Naive thymus-derived CD4-positive, alpha-beta T cell (primary cell): ENCODE measurements at regions of chr5 and their contacts with region 1.

Region 1: GRCh38 chr5:133423618-133424282 is 188.6 kb downstream of the FSTL4 start:
- DNase-seq: peak; percentile 17 to 73 (median 52)
- ATAC-seq: peak; percentile 83
- H3K4me3 ChIP-seq: no peak overlapping the region
- H3K4me3 Mint-ChIP-seq: no peak overlapping the region
- H3K27ac ChIP-seq: no peak overlapping the region
- H3K27ac Mint-ChIP-seq: peak overlapping the region in 1 of 9 donors; percentile 77
- H3K4me1 ChIP-seq: no peaks in the 10 kb centered on the region
- H3K4me1 Mint-ChIP-seq: peaks cover 0 to 10% (median 5%) of the 10 kb centered on the region in 7 donors
- H3K27me3 ChIP-seq: no peaks in the 10 kb centered on the region
- H3K27me3 Mint-ChIP-seq: peaks cover 6 to 16% (median 14%) of the 10 kb centered on the region in 5 donors

Region 2: DNA sequence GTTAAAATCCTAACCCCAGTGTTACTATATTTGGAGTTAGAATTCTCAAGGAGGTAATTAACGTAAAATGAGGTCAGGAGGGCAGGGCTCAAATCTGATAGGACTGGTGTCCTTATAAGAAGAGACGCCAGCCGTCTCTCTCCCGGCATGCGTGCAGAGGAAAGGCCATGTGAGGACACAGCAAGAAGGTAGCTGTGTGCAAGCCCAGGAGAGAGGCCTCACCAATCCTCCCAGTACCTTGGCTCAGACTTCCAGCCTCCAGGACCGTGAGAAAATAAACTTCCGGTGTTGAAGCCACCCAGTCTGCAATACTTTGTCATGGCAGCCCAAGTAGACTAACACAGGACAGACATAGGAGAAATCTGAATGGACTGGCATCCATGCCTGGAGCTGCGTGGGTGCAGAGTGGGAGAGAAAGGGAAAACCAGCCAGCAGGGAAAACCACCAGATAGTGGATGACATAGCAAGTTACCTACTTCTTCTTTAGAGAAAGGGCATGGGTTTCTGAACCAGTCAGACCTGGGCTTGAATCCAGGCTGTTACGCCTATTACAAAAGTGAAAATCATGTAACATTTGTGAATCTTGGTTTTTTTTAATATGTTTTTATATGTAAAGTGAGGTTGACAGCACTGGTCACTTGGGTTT is 99.4 kb after region 1 on chr5:
- CTCF ChIA-PET with region 1: no interaction called
- POLR2A ChIA-PET with region 1: no interaction called
- intact Hi-C with region 1: no loop called
- DNase-seq: no peak
- ATAC-seq: no peak
- H3K4me3 ChIP-seq: no peak overlapping the region
- H3K4me3 Mint-ChIP-seq: no peak overlapping the region
- H3K27ac ChIP-seq: no peak overlapping the region
- H3K27ac Mint-ChIP-seq: no peak overlapping the region
- H3K4me1 ChIP-seq: no peaks in the 10 kb centered on the region
- H3K4me1 Mint-ChIP-seq: no peaks in the 10 kb centered on the region
- H3K27me3 ChIP-seq: no peaks in the 10 kb centered on the region
- H3K27me3 Mint-ChIP-seq: peaks cover 0 to 25% (median 13%) of the 10 kb centered on the region in 5 donors

Region 3: DNA sequence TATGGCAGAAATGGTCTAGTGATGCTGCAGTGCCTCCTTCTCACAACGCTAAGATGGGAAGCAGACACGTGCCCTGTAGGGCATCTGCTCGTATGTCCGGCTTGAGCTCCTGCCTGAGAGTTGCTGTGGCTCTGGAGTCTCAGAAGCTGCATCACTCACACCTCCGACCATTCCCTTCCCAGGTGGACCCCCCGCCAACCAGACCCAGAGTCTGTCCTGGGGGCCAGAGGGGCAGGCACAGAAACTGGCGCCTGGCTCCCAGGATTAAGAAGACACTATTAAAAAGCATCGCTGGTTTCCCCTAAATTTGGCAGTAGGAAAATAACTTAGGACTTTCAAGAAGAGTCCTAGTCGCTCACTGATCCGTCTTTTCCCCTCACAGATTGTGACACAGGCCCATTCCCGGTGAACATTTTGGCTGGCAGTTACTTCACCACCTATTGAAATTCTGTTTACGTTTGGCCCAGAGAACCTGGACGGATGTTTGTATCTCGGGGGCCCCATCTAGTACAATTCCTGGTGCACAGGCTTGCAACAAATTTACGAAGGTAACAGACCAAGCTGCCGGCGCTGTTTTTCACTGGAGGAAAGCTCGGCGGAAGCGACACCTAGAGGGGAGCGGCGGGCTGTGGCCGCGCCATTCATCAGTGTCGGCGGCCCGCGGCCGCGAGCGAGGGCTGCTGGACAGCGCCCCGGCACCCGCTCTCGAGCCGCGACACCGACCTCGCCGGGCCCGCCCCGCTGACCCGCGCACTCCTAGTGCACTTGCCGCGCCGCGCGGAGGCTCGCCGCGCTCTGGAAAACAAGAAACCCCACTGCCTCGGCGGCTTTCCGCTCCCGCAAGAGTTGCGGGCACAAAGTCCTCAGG is 187.0 kb after region 1 on chr5:
- CTCF ChIA-PET with region 1: no interaction called
- POLR2A ChIA-PET with region 1: no interaction called
- intact Hi-C with region 1: loop called in 1 of 2 experiments (anchors 5 kb)
- DNase-seq: peak in 5 of 9 donors; percentile 8 to 48 (median 16)
- ATAC-seq: peak; percentile 58
- H3K4me3 ChIP-seq: peak overlapping the region; percentile 50
- H3K4me3 Mint-ChIP-seq: peak overlapping the region; percentile 49 to 87 (median 72)
- H3K27ac ChIP-seq: no peak overlapping the region
- H3K27ac Mint-ChIP-seq: no peak overlapping the region
- H3K4me1 ChIP-seq: no peaks in the 10 kb centered on the region
- H3K4me1 Mint-ChIP-seq: peaks cover 0 to 21% (median 6%) of the 10 kb centered on the region in 7 donors
- H3K27me3 ChIP-seq: peaks cover 7 to 13% of the 10 kb centered on the region in 2 donors
- H3K27me3 Mint-ChIP-seq: peaks cover 58 to 75% (median 63%) of the 10 kb centered on the region in 5 donors

Region 4: DNA sequence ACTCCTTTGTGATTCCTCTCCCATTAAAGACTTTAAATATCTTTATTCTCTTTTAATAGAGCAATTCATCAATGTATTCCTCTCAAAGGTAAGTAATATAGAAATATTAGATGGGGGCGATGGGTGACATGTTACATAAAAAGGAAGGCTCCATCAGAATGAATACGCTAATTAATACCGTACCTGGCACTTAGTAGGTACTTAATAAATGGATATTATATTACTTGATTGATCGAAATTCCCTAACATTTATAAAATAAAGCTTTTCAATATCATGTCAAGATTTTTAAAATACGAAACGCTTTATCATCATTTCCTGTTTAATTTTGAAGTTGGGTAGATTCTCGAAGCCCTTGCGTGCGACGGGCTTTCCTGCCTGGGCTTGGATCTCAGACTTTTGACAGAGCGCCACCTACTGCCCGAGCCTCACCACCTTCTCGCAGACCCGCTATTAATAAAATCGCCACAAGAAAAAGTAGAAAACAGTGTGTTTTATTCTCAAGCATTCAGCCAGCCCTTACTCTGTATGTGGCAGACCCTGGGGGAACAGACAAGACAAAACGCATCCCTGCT is 445.3 kb after region 1 on chr5:
- CTCF ChIA-PET with region 1: interaction called, 12 read pairs
- POLR2A ChIA-PET with region 1: no interaction called
- intact Hi-C with region 1: loop called (anchors 1 to 2 kb)
- DNase-seq: peak; percentile 42 to 70 (median 62)
- ATAC-seq: peak; percentile 67
- H3K4me3 ChIP-seq: no peak overlapping the region
- H3K4me3 Mint-ChIP-seq: peak overlapping the region in 4 of 10 donors; percentile 4 to 33 (median 20)
- H3K27ac ChIP-seq: no peak overlapping the region
- H3K27ac Mint-ChIP-seq: peak overlapping the region in 1 of 9 donors; percentile 25
- H3K4me1 ChIP-seq: no peaks in the 10 kb centered on the region
- H3K4me1 Mint-ChIP-seq: peaks cover 0 to 19% (median 6%) of the 10 kb centered on the region in 7 donors
- H3K27me3 ChIP-seq: no peaks in the 10 kb centered on the region
- H3K27me3 Mint-ChIP-seq: peaks cover 0 to 31% (median 3%) of the 10 kb centered on the region in 5 donors

Region 5: DNA sequence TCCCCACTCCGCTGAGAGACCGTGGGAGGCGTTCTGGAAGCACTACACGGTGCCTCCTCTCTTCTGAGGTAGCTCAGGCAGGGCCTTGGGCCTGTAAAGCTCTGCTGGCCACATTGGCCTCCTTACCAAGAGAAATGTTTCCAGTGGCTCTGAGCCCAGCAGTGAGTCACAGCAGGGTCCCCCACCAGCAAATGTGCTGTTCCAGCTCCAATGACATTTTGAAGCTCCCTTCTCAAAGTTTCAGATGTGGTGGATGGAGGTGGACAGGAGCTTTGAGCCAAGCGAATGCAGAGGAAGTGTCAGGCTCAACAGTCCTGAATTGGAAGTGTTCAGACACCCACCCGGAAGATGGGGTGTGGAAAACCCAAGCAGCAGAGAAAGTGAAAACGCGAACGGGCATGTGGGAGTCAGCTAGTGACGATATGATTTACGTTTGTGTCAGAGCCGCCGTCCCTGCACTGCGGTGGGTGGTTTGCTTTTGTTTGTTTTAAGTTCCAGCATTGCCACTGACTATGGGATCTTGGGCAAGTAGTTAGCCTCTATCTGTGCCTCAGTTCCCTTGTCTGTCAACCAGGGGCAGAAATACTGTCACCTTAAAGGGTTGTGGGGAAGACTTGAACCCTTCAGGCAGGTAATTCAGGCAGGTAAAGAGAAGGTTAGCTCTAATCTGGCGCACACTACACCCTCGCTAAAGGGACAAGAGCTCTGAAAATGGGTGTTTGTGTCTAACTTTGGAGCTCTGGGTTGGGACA is 506.5 kb after region 1 on chr5:
- CTCF ChIA-PET with region 1: no interaction called
- POLR2A ChIA-PET with region 1: no interaction called
- intact Hi-C with region 1: loop called in 1 of 2 experiments (anchors 10 kb)
- DNase-seq: peak in 8 of 9 donors; percentile 29 to 75 (median 59)
- ATAC-seq: peak; percentile 74
- H3K4me3 ChIP-seq: peak overlapping the region; percentile 51
- H3K4me3 Mint-ChIP-seq: peak overlapping the region; percentile 73 to 91 (median 84)
- H3K27ac ChIP-seq: peak overlapping the region; percentile 69
- H3K27ac Mint-ChIP-seq: peak overlapping the region; percentile 86 to 97 (median 91)
- H3K4me1 ChIP-seq: peaks cover 4 to 8% of the 10 kb centered on the region in 2 donors
- H3K4me1 Mint-ChIP-seq: peaks cover 8 to 32% (median 19%) of the 10 kb centered on the region in 7 donors
- H3K27me3 ChIP-seq: no peaks in the 10 kb centered on the region
- H3K27me3 Mint-ChIP-seq: peaks cover 0 to 5% (median 0%) of the 10 kb centered on the region in 5 donors

Region 6: DNA sequence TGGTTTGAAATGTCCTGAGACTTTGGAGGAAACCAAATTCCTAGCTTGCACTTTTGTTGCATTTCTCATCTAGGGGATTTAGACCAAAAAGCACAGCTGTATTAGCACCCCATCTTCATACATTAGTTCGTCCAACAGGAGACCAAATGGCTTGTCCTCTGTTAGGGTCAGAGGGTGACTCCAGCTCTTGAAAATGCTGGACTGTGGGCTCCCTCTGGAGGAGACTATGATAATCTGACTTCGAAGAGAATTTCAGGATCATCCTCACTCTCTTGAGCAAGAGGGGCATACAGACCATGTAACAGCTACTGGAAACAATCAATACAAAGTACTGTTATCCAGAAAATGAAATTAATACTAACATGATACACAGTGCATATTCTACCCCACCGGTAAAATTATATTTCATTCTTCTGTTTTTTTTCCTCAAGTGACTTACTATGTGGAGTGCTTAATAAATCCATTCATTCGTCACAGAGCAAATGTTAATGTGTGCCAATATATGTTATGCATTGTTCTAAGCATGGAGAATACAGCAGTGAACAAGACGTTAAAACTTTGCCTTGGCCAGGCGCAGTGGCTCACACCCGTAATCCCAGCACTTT is 865.9 kb after region 1 on chr5:
- CTCF ChIA-PET with region 1: no interaction called
- POLR2A ChIA-PET with region 1: no interaction called
- intact Hi-C with region 1: loop called in 1 of 2 experiments (anchors 5 kb)
- DNase-seq: peak in 7 of 9 donors; percentile 13 to 61 (median 50)
- ATAC-seq: peak; percentile 91
- H3K4me3 ChIP-seq: no peak overlapping the region
- H3K4me3 Mint-ChIP-seq: no peak overlapping the region
- H3K27ac ChIP-seq: no peak overlapping the region
- H3K27ac Mint-ChIP-seq: no peak overlapping the region
- H3K4me1 ChIP-seq: no peaks in the 10 kb centered on the region
- H3K4me1 Mint-ChIP-seq: peaks cover 0 to 6% (median 0%) of the 10 kb centered on the region in 7 donors
- H3K27me3 ChIP-seq: no peaks in the 10 kb centered on the region
- H3K27me3 Mint-ChIP-seq: peaks cover 0 to 39% (median 3%) of the 10 kb centered on the region in 5 donors